Mammary epithelial cell (primary cell): ENCODE measurements at regions of chr19 and their contacts with region 1.

Region 1: GRCh38 chr19:9140159-9140874 is at the start of gene ZNF317:
- DNase-seq: peak; percentile 85
- H3K4me3 ChIP-seq: peak within 1 kb of the TSS; percentile 80 to 83 (median 80)
- H3K27ac ChIP-seq: peak within 1 kb of the TSS; percentile 83
- H3K4me1 ChIP-seq: peaks cover 6% of the 10 kb centered on the region
- H3K27me3 ChIP-seq: no peaks in the 10 kb centered on the region
- CTCF ChIP-seq: no peak
- total RNA-seq, gene ZNF317: 26.3 to 36.3 TPM

Region 2: GRCh38 chr19:9205501-9206113 is 65.3 kb after region 1 on chr19:
- CTCF ChIA-PET with region 1: no interaction called
- dilution Hi-C with region 1: no loop called
- in situ Hi-C with region 1: no loop called
- intact Hi-C with region 1: loop called (anchors 1 kb)
- DNase-seq: peak; percentile 53
- H3K4me3 ChIP-seq: peak overlapping the region; percentile 21 to 33 (median 27)
- H3K27ac ChIP-seq: no peak overlapping the region
- H3K4me1 ChIP-seq: no peaks in the 10 kb centered on the region
- H3K27me3 ChIP-seq: no peaks in the 10 kb centered on the region
- CTCF ChIP-seq: peak; percentile 71 to 89

Region 3: DNA sequence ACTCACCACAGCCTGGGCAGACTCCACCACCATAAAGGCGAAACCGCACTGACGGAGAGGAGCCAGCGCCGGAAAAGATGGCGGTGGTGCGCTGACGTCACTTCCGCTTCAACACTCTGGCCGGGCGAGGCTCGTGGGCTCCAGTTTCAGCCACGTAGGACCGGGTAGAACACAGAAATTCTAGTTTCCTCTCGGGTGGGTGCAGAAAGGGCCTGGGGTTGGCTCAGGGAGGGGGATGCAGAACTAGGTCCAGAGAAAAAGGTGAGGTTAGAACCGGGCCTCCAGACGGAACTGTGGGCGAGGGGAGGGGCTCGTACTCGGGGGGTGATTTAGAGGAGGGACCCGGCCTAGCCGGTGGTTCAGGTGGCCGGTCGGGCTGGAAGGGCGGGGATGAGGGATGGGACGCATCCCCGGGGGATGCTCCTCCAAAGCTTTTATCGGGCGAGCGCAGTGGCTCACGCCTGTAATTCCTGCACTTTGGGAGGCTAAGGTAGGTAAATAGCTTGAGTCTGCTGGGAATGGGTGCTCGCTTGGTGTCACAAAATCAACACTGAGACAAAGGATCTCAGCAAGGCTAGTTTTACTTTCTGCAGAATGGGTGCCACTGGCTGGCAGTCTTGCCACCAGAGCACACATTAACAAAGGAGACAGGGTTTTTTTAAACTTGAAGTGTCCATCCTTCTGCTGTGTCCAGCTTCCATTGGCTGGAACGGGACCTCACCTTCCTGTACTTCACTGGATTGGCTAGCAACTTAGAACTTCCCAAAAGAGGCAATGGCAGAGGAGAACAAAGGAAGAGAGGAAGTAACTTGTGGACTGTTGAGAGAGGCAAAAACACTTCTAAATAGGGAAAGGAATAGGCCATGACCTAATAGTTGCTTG is 481.1 kb after region 1 on chr19 and contains the start of gene ZNF561:
- CTCF ChIA-PET with region 1: no interaction called
- dilution Hi-C with region 1: no loop called
- in situ Hi-C with region 1: no loop called
- intact Hi-C with region 1: loop called (anchors 1 kb)
- DNase-seq: peak; percentile 90
- H3K4me3 ChIP-seq: peak within 1 kb of the TSS; percentile 81 to 93 (median 86)
- H3K27ac ChIP-seq: peak within 1 kb of the TSS; percentile 77
- H3K4me1 ChIP-seq: peaks cover 21% of the 10 kb centered on the region
- H3K27me3 ChIP-seq: no peaks in the 10 kb centered on the region
- CTCF ChIP-seq: no peak
- total RNA-seq, gene ZNF561: 62.6 to 78.3 TPM

Region 4: DNA sequence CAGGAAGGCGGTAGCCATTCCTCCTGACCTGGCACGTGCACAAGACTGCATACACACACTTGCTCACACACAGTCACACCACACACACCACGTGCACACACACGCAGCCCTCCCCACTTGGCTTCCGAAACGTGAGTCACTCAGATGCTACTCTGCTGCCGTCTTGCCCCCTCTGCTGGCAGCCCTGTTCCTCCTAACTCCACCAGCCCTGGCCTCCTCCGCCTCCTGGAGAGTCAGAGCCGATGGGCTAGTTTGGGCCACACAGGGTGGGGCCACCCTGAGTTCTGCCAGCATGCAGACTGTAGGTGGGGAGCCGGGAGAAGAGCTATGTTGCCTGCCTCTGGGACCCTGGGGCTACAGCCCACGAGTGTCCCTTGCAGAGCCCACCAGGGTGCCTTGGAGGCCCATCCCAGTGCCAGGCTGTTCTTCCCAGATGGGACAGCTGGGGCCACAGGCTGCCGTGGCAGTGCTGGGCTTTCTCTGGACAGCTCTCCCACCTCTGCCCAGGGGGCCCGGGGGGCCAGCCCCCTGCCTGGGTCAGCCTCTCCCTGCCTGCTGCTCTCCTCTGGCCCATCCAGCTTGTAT is 706.9 kb after region 1 on chr19:
- CTCF ChIA-PET with region 1: no interaction called
- dilution Hi-C with region 1: no loop called
- in situ Hi-C with region 1: no loop called
- intact Hi-C with region 1: loop called (anchors 5 kb)
- DNase-seq: peak; percentile 71
- H3K4me3 ChIP-seq: no peak overlapping the region
- H3K27ac ChIP-seq: no peak overlapping the region
- H3K4me1 ChIP-seq: no peaks in the 10 kb centered on the region
- H3K27me3 ChIP-seq: no peaks in the 10 kb centered on the region
- CTCF ChIP-seq: peak; percentile 70 to 78

Region 5: GRCh38 chr19:10000171-10000826 is 860.0 kb after region 1 on chr19:
- CTCF ChIA-PET with region 1: no interaction called
- dilution Hi-C with region 1: no loop called
- in situ Hi-C with region 1: no loop called
- intact Hi-C with region 1: loop called (anchors 10 kb)
- DNase-seq: peak; percentile 34
- H3K4me3 ChIP-seq: no peak overlapping the region
- H3K27ac ChIP-seq: no peak overlapping the region
- H3K4me1 ChIP-seq: no peaks in the 10 kb centered on the region
- H3K27me3 ChIP-seq: no peaks in the 10 kb centered on the region
- CTCF ChIP-seq: peak; percentile 79 to 88